CD4-positive, alpha-beta memory T cell (primary cell): ENCODE measurements at regions of chr6 and their contacts with region 1.

Region 1: DNA sequence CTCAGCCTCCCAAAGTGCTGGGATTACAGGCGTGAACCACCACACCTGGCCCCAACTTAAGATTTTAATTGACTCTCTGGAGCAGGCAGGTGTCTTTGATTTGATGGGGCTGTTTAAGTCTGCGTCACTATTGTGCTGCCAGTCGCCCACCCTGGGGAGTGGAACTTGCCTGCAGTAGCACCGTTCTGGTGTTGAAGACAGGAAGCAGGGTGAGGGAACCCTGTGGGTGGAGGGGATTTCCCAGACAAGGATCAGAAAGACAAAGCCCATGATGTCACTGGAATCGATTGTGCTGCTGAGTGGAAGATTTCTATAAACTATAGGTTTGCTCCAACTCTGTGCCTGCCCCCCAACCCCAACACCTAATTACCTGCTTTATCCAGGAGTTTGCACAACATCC is 11.0 kb downstream of the ALDH8A1 start:
- DNase-seq: peak in 4 of 5 donors; percentile 6 to 83 (median 24)
- H3K4me3 ChIP-seq: no peak overlapping the region
- H3K4me3 Mint-ChIP-seq: no peak overlapping the region
- H3K27ac ChIP-seq: no peak overlapping the region
- H3K27ac Mint-ChIP-seq: peak overlapping the region in 2 of 7 donors; percentile 42 to 46
- H3K4me1 ChIP-seq: peaks cover 6% of the 10 kb centered on the region
- H3K4me1 Mint-ChIP-seq: peaks cover 0 to 11% (median 0%) of the 10 kb centered on the region in 4 donors
- H3K27me3 ChIP-seq: no peaks in the 10 kb centered on the region
- H3K27me3 Mint-ChIP-seq: no peaks in the 10 kb centered on the region

Region 2: DNA sequence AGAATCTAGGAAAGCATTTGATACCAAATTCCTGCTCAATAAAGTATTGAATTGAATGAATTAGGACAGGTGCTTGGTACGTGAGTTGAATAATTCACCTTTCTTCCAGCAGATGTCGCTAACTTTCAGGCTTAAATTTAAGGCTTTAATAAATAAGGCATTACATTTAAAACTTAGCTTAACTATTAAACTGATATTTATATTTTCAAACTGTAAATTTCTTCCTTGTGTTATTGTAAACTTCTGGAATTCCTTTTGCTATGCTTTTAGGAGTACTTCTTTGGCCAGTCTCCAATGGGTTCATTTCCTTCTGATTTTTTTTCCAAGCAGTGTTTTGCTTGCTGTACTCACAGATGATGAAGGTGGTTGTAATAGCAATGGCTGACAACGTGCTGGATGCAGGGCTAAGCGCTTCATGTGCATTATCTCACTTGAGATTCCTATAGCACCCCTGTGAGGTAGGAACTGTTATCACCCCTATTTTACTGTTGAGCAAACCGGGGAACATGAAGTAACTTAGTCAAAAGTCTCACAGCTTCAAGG is 815.2 kb before region 1 on chr6:
- CTCF ChIA-PET with region 1: interaction called, 100 read pairs
- POLR2A ChIA-PET with region 1: no interaction called
- intact Hi-C with region 1: loop called (anchors 1 kb)
- DNase-seq: peak in 4 of 5 donors; percentile 19 to 72 (median 62)
- H3K4me3 ChIP-seq: no peak overlapping the region
- H3K4me3 Mint-ChIP-seq: peak overlapping the region in 3 of 8 donors; percentile 59 to 77 (median 60)
- H3K27ac ChIP-seq: no peak overlapping the region
- H3K27ac Mint-ChIP-seq: peak overlapping the region in 3 of 7 donors; percentile 13 to 74 (median 66)
- H3K4me1 ChIP-seq: no peaks in the 10 kb centered on the region
- H3K4me1 Mint-ChIP-seq: peaks cover 0 to 3% (median 3%) of the 10 kb centered on the region in 4 donors
- H3K27me3 ChIP-seq: no peaks in the 10 kb centered on the region
- H3K27me3 Mint-ChIP-seq: peaks cover 0 to 1% of the 10 kb centered on the region in 2 donors

Region 3: DNA sequence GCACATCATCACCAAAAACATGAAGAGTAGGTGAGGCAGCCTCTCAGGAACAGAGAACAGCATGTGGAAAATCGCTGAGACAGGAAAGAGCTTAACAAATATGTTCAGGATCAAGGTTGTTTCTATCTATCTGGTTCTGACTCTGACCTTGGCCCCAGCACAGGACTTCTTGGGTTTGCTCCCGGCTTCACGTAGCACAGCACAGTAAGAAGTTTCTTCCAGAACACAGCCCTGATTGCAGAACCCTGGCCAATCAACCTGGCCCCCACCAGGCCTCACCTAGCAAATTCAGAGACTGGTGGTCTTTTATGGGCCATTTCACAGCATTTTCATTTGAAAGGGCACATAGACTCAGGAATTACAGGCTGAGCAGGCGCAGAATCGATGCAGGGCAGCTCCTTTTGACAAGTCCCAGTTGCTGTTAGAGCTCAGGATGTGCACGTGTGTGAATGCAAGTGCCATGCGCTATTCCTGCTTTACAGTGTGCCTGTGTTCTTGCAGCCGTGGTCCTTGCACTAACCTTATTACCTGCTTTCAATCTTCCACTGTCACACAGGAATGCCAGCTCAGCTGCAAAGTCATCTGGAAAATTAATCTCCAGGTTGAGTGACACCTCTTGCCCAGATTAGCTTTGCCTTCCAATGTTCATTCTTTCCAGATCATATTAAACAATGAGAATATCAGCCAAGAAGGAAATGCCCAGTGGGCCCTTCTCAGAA is 786.0 kb before region 1 on chr6:
- CTCF ChIA-PET with region 1: interaction called, 89 read pairs
- POLR2A ChIA-PET with region 1: no interaction called
- intact Hi-C with region 1: loop called (anchors 1 kb)
- DNase-seq: no peak
- H3K4me3 ChIP-seq: no peak overlapping the region
- H3K4me3 Mint-ChIP-seq: no peak overlapping the region
- H3K27ac ChIP-seq: no peak overlapping the region
- H3K27ac Mint-ChIP-seq: no peak overlapping the region
- H3K4me1 ChIP-seq: no peaks in the 10 kb centered on the region
- H3K4me1 Mint-ChIP-seq: no peaks in the 10 kb centered on the region
- H3K27me3 ChIP-seq: no peaks in the 10 kb centered on the region
- H3K27me3 Mint-ChIP-seq: peaks cover 0 to 7% of the 10 kb centered on the region in 2 donors

Region 4: DNA sequence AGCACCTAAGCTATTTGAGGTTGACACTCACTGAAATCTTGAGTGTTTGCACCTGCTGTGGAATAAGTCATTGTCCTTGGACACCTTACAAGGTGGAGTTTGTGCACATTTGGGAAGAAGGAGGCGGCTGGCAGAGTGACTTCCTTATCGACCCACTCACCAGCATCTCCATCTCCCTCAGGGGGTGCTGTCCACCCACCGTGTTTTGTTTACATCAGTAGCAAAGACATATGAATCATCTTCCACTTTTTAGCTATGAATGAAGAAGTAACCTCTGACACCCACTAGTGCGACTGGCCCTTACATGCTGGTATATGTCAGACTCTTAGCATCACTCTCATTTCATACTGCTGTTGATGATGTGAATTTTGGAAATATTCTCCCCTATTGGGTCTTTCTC is 501.5 kb before region 1 on chr6:
- CTCF ChIA-PET with region 1: no interaction called
- POLR2A ChIA-PET with region 1: no interaction called
- intact Hi-C with region 1: no loop called
- DNase-seq: no peak
- H3K4me3 ChIP-seq: peak overlapping the region in 1 of 2 donors; percentile 5
- H3K4me3 Mint-ChIP-seq: peak overlapping the region in 5 of 8 donors; percentile 81 to 91 (median 86)
- H3K27ac ChIP-seq: no peak overlapping the region
- H3K27ac Mint-ChIP-seq: peak overlapping the region in 2 of 7 donors; percentile 51 to 68
- H3K4me1 ChIP-seq: peaks cover 23% of the 10 kb centered on the region
- H3K4me1 Mint-ChIP-seq: peaks cover 18 to 20% (median 19%) of the 10 kb centered on the region in 4 donors
- H3K27me3 ChIP-seq: no peaks in the 10 kb centered on the region
- H3K27me3 Mint-ChIP-seq: no peaks in the 10 kb centered on the region

Region 5: GRCh38 chr6:134640975-134641429 is 297.9 kb before region 1 on chr6:
- CTCF ChIA-PET with region 1: interaction called, 35 read pairs
- POLR2A ChIA-PET with region 1: no interaction called
- intact Hi-C with region 1: loop called (anchors 2 kb)
- DNase-seq: peak; percentile 73 to 78 (median 75)
- H3K4me3 ChIP-seq: no peak overlapping the region
- H3K4me3 Mint-ChIP-seq: no peak overlapping the region
- H3K27ac ChIP-seq: no peak overlapping the region
- H3K27ac Mint-ChIP-seq: no peak overlapping the region
- H3K4me1 ChIP-seq: peaks cover 7% of the 10 kb centered on the region
- H3K4me1 Mint-ChIP-seq: peaks cover 10 to 20% (median 15%) of the 10 kb centered on the region in 4 donors
- H3K27me3 ChIP-seq: no peaks in the 10 kb centered on the region
- H3K27me3 Mint-ChIP-seq: no peaks in the 10 kb centered on the region

Region 6: DNA sequence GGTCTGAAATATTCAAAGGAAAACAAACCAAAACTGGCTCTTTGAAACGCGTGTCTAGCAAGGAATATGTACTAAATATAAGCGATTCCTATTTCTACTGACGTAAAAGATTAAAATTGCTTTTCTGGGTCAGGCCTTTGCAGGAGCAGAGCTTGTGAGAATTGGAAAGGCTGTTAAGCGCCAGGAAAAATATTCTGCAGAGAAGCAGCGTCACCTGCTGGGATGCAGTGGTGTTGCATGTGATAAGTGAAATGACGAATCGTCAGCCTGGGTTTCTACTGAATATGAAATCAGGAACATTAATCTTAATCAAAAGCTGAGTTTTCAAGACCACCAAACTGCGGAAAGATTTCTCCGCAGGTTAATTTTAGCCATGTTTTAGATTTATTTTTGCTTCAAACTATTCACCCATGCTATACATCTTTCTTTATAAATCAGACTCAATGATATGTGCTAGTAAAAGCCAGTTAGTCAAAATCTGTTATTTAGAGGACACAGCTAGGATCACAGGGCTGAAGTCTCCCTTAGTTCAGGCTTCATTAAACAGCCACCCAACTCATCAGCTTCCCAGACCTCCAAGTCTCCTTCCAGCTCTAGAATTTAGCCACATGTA is 56.4 kb before region 1 on chr6:
- CTCF ChIA-PET with region 1: interaction called, 3 read pairs
- POLR2A ChIA-PET with region 1: no interaction called
- intact Hi-C with region 1: loop called (anchors 1 kb)
- DNase-seq: peak; percentile 22 to 49 (median 45)
- H3K4me3 ChIP-seq: no peak overlapping the region
- H3K4me3 Mint-ChIP-seq: no peak overlapping the region
- H3K27ac ChIP-seq: no peak overlapping the region
- H3K27ac Mint-ChIP-seq: no peak overlapping the region
- H3K4me1 ChIP-seq: no peaks in the 10 kb centered on the region
- H3K4me1 Mint-ChIP-seq: no peaks in the 10 kb centered on the region
- H3K27me3 ChIP-seq: no peaks in the 10 kb centered on the region
- H3K27me3 Mint-ChIP-seq: peaks cover 14 to 18% of the 10 kb centered on the region in 2 donors

Region 7: DNA sequence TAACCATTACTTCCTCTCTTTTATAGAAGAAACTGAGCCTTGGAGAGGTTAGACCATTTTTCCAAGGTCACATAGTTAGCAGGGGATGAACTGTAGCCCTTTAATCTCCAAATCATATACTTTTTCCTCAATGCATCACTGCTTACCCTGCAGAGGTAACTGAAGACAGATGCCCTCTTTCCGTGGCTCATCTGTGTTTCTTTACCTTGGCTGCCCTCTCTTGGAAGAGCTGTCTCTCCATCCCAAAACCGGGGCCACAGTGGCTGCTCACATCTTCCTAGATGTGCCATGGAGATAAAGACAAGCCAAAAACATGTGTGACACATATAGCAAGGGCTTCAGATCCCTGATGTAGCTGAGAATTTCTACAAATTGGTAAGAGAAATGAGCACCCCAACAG is 11.6 kb after region 1 on chr6:
- CTCF ChIA-PET with region 1: interaction called, 16 read pairs
- POLR2A ChIA-PET with region 1: no interaction called
- intact Hi-C with region 1: no loop called
- DNase-seq: no peak
- H3K4me3 ChIP-seq: no peak overlapping the region
- H3K4me3 Mint-ChIP-seq: no peak overlapping the region
- H3K27ac ChIP-seq: no peak overlapping the region
- H3K27ac Mint-ChIP-seq: no peak overlapping the region
- H3K4me1 ChIP-seq: no peaks in the 10 kb centered on the region
- H3K4me1 Mint-ChIP-seq: no peaks in the 10 kb centered on the region
- H3K27me3 ChIP-seq: no peaks in the 10 kb centered on the region
- H3K27me3 Mint-ChIP-seq: no peaks in the 10 kb centered on the region

Region 8: DNA sequence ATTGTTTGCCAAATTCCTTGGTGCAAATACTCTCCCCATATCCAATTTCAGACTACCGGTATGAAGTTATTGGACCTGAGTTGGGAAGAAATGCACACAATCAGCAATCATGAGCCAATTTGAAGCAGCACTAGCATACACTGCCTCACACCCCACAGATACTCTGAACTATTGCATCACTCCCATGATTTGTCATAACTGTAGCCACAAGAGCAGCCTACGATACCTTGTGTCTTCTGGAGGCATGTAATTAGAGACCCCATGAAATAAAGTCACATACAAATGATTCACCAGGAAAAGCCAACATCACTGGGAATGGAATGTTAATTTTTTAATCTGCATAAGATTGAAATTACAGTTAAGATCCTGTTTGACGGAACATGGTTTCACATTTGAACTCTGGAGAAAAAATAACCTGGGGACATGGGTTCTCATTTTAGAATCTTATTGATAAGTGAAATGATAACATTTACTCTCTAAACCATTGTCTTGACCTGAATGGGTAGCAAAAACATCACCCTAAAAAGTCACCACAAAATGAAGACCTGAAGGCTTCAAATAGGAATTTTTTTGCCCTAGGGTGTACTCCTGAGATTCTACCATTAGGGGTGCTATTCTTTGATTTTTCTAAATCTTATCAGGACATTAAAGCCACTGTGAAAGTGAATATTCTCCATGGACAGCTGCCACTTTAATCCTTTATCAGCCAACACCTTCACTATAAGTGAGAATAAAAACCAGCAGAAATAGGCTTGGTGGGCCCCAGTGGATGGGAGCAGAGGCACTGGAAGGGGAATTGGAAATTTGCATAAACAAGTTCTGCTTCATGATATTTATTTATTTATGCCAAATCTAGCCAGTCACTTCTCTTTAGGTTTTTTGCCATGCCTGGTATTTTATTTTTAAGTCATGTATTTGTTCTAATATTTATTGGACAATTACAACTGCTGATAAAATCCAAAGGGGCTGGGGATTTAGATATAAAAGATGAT is 150.2 kb after region 1 on chr6:
- CTCF ChIA-PET with region 1: no interaction called
- POLR2A ChIA-PET with region 1: no interaction called
- intact Hi-C with region 1: no loop called
- DNase-seq: peak; percentile 24 to 65 (median 34)
- H3K4me3 ChIP-seq: peak overlapping the region; percentile 13 to 44
- H3K4me3 Mint-ChIP-seq: peak overlapping the region; percentile 64 to 87 (median 80)
- H3K27ac ChIP-seq: no peak overlapping the region
- H3K27ac Mint-ChIP-seq: peak overlapping the region; percentile 62 to 95 (median 82)
- H3K4me1 ChIP-seq: peaks cover 61% of the 10 kb centered on the region
- H3K4me1 Mint-ChIP-seq: peaks cover 36 to 68% (median 53%) of the 10 kb centered on the region in 4 donors
- H3K27me3 ChIP-seq: no peaks in the 10 kb centered on the region
- H3K27me3 Mint-ChIP-seq: no peaks in the 10 kb centered on the region